HCT116 (cell line): ENCODE measurements at regions of chr17 and their contacts with region 1.

Region 1: DNA sequence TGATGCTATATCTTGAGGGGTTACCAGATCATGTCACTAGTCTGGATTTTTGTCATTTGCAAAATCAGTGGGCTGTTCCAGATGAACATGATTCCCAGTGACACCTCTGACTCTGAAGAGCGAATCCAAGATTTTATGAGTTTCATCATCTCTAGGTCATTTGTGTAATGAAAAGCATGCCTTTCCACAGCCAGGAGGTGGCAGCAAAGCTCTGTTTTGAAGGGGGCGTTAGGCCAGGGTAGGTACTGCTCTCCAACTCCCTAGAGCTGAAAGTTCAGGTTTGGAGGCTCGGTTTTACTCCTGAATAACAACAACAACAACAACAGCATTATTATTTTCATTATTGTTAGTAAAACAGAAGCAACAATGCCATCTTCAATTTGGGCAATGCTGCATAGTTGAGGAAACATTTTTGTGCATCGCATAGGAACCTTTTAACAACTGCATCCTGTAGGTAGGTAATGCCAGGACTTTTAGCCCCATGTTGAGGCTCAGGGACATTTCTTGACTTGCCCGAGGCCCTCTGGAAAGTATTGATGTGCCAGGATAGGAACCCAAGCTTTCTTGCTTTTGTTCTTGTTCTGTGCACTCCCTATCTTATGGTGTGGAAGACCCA is 77.0 kb downstream of the MYH13 start:
- DNase-seq: peak; percentile 65
- ATAC-seq: peak; percentile 77
- H3K4me3 ChIP-seq: no peak overlapping the region
- H3K27ac ChIP-seq: no peak overlapping the region
- H3K4me1 ChIP-seq: peaks cover 2 to 25% of the 10 kb centered on the region in 2 experiments; a peak in 3 of 4 replicates
- H3K27me3 ChIP-seq: no peaks in the 10 kb centered on the region
- CTCF ChIP-seq: peak; percentile 72 to 89 (median 80); a peak in 5 of 6 replicates
- POLR2A ChIP-seq: no peak
- RAD21 ChIP-seq: peak; percentile 85

Region 2: DNA sequence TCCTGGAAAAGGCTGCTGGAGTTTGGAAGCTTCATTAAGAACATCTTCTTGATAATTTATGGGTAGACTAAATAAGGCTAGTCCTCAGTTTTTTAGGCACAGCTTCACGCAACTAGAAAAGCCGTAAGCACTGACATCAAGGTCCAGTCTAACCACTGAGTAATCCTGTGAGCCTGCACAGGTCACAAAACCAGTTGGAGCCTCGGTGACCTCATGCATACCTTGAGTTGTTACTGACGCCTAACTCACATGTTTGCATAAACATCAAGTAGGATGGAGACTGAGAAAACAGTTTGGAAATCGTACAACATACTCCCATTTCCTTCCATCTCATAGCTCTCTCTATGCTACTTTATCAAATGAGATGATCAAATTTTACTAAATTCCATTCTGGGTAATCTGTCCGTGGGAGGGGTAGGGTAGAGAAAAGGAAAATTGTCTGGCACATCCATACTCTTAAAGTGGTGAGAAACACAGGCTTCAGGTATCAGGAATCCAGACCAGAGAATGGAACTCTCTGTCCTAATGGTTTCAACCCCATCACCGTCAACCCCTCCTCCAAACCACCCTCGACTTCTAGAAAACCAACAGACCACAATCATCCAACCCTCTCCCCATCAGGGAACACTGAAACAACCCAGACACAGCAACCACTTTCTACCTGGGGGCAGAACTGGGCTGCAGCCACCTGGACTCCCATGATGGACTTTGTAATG is 326.8 kb before region 1 on chr17:
- CTCF ChIA-PET with region 1: interaction called, 4 read pairs
- POLR2A ChIA-PET with region 1: no interaction called
- RAD21 ChIA-PET with region 1: interaction called in 1 of 2 experiments, 3 read pairs
- intact Hi-C with region 1: loop called (anchors 5 kb)
- DNase-seq: no peak
- ATAC-seq: no peak
- H3K4me3 ChIP-seq: no peak overlapping the region
- H3K27ac ChIP-seq: no peak overlapping the region
- H3K4me1 ChIP-seq: peaks cover 8 to 9% of the 10 kb centered on the region in 2 experiments
- H3K27me3 ChIP-seq: no peaks in the 10 kb centered on the region
- CTCF ChIP-seq: no peak
- POLR2A ChIP-seq: no peak
- RAD21 ChIP-seq: no peak

Region 3: DNA sequence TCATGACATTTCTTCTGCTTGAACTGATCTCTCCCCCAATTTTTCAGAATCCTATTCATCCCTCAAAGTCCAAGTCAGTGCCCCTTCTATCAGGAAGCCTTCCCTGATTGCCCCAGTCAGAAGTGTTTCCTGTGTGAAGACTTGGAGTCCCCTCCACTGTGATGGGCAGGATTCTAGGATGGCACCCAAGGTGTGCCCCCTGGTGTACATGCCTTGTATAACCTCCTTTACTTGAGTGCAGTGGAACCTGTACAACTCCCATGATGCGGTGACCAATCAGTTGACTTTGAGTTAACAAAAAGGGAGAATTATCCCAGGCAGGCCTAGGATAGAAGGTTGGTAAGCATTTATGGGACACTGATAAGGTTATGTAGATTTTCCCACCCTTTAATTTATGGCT is 53.6 kb after region 1 on chr17:
- CTCF ChIA-PET with region 1: no interaction called
- POLR2A ChIA-PET with region 1: no interaction called
- RAD21 ChIA-PET with region 1: no interaction called
- intact Hi-C with region 1: loop called (anchors 2 kb)
- DNase-seq: peak; percentile 19
- ATAC-seq: peak; percentile 84
- H3K4me3 ChIP-seq: no peak overlapping the region
- H3K27ac ChIP-seq: no peak overlapping the region
- H3K4me1 ChIP-seq: no peaks in the 10 kb centered on the region
- H3K27me3 ChIP-seq: no peaks in the 10 kb centered on the region
- CTCF ChIP-seq: peak; percentile 16 to 57 (median 45); a peak in 4 of 6 replicates
- POLR2A ChIP-seq: no peak
- RAD21 ChIP-seq: peak; percentile 25; the same call in 1 of the 2 replicates

Region 4: GRCh38 chr17:10403589-10403988 is 107.8 kb after region 1 on chr17:
- CTCF ChIA-PET with region 1: no interaction called
- POLR2A ChIA-PET with region 1: no interaction called
- RAD21 ChIA-PET with region 1: no interaction called
- intact Hi-C with region 1: no loop called
- DNase-seq: no peak
- ATAC-seq: no peak
- H3K4me3 ChIP-seq: no peak overlapping the region
- H3K27ac ChIP-seq: no peak overlapping the region
- H3K4me1 ChIP-seq: no peaks in the 10 kb centered on the region
- H3K27me3 ChIP-seq: no peaks in the 10 kb centered on the region; the same call in 1 of the 2 replicates
- CTCF ChIP-seq: no peak
- POLR2A ChIP-seq: no peak
- RAD21 ChIP-seq: no peak

Region 5: DNA sequence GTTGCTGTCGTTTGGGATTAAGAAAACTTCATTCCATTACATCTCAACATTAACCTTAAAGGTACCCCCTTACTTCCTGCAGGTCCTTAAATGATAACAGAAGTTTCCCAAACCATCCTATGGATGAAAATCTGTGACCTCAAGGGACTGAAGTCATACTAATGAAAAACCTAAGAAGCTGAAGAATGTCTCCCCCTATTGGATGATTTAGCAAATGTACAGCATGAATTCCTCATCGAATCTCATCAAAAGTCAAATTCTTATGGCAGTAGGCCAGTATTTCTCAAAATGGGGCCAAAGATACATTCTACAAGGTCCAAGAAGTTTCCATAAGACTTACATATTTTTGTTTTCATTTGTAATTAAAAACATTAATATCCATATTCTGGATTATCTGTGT is 388.0 kb after region 1 on chr17:
- CTCF ChIA-PET with region 1: no interaction called
- POLR2A ChIA-PET with region 1: no interaction called
- RAD21 ChIA-PET with region 1: no interaction called
- intact Hi-C with region 1: loop called (anchors 5 kb)
- DNase-seq: peak; percentile 28
- ATAC-seq: peak; percentile 67; the same call in 1 of the 2 replicates
- H3K4me3 ChIP-seq: no peak overlapping the region
- H3K27ac ChIP-seq: no peak overlapping the region
- H3K4me1 ChIP-seq: no peaks in the 10 kb centered on the region
- H3K27me3 ChIP-seq: no peaks in the 10 kb centered on the region
- CTCF ChIP-seq: peak; percentile 20 to 74 (median 62); a peak in 5 of 6 replicates
- POLR2A ChIP-seq: no peak
- RAD21 ChIP-seq: peak; percentile 31; the same call in 1 of the 2 replicates